ENCODE measurements at regions of chr7 and their contacts with region 1.

Region 1: GRCh38 chr7:108135446-108136190 is 5.5 kb upstream of the LAMB4 start:
- DNase-seq: no peak

Region 2: DNA sequence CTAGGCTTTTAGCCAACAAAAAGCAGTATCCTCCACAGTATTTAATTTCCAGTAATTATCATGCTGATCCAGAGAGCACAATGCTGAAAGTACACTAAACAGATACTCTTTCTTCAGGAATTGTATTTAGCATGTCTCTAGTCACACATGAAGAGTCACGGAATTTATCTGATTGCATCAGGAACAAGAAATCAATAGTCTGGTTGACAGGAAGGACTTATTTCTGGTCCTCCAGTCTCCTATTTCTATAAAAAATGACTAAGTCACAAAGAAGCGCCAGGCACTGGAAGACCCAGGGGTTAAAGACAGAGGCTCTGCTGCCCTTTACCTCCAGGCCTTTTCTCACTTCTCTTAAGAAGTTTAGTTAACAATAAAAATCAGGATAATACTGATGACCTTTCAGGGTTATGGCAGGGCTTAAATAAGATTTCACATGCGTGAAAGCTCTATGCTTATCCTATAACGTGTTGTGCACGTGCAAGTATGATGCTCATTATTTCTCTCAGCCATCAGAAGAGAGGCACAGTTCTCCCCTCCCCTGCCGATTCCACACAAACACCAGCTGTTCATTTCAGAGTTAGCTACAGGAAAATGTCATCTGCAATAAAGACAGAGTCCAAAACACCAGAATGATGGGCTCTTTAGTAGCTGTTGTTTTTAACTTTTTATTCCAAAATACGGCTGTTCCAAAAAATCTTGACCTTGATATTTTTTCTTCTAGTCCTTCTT is 438.1 kb before region 1 on chr7:
- intact Hi-C with region 1: no loop called
- DNase-seq: no peak

Region 3: GRCh38 chr7:108049962-108050361 is 85.7 kb before region 1 on chr7:
- intact Hi-C with region 1: loop called in 1 of 2 experiments (anchors 10 kb)
- DNase-seq: no peak